ENCODE measurements at regions of chrX and their contacts with region 1.

Region 1: DNA sequence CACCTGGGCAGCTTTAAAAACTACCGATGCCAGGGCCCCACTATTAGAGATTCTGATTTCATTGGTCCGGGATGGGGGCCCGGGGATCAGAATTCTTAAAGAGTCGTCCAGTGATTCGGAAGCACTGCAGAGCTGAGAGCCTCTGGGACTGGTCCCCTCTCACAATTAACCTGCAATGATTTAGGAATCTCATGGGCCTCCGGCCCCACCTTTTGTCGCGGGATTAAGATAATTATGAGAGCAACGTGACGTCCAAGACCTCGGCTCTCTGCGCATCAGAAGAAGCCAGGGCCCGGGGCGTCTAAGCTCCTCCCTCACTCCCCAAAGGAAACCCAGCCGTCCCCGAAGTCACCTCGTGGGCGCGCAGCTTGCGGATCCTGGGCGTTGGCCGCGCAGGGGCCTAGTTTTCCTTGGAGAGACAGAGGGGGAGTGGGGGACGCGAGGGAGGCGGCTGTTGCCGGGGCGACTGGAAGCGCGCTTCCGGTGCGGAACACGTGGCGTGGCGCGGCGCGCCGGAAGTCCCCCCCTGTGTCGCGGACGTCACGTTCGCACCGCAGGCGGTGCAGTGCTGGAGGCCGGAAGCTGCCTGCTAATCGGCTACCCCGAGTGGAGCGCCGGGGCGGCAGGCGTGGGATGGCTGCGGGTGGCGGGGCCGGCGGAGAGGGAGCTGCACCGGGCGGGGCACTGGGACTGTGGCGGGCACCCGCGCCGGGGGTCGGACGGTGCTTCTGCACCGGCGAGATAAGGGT is at the start of gene GEMIN8:
- DNase-seq: peak; percentile 90 to 96 (median 93)
- H3K4me3 ChIP-seq: peak within 1 kb of the TSS; percentile 49
- H3K27ac ChIP-seq: peak within 1 kb of the TSS in 1 of 2 donors; percentile 57
- H3K4me1 ChIP-seq: peaks cover 1% of the 10 kb centered on the region
- H3K27me3 ChIP-seq: no peaks in the 10 kb centered on the region
- CTCF ChIP-seq: no peak
- EP300 ChIP-seq: no peak
- POLR2A ChIP-seq: peak; percentile 66
- total RNA-seq, gene GEMIN8: 18.0 to 24.6 (median 22.4) TPM

Region 2: GRCh38 chrX:13506574-13506973 is 523.0 kb before region 1 on chrX:
- intact Hi-C with region 1: loop called (anchors 2 to 10 kb)
- DNase-seq: peak; percentile 21 to 63 (median 53)
- H3K4me3 ChIP-seq: no peak overlapping the region
- H3K27ac ChIP-seq: no peak overlapping the region
- H3K4me1 ChIP-seq: no peaks in the 10 kb centered on the region
- H3K27me3 ChIP-seq: no peaks in the 10 kb centered on the region
- CTCF ChIP-seq: peak; percentile 40 to 47 (median 47)
- EP300 ChIP-seq: no peak
- POLR2A ChIP-seq: no peak

Region 3: DNA sequence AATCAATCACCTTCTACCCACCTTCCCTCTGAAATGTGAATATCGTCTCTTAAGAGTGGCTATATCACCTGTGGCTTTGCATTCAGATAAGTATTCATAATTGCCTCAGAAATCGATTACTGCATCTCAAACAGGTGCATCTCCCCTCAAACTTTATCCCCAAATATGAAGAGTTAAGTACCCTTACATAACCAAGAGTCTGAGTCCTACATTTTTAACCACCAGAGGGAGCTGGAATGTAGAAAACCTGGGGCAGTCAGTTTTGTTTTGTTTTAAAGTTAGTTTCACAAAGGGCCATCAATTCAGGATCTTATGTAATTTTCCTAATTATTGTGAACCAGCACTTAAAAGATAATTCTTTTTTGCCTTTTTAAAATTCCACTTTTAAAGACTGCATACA is 371.0 kb before region 1 on chrX:
- intact Hi-C with region 1: loop called in 3 of 4 experiments (anchors 5 kb)
- DNase-seq: no peak
- H3K4me3 ChIP-seq: no peak overlapping the region
- H3K27ac ChIP-seq: peak overlapping the region in 1 of 2 donors; percentile 42
- H3K4me1 ChIP-seq: peaks cover 3% of the 10 kb centered on the region
- H3K27me3 ChIP-seq: no peaks in the 10 kb centered on the region
- CTCF ChIP-seq: peak; percentile 70 to 82 (median 79)
- EP300 ChIP-seq: no peak
- POLR2A ChIP-seq: no peak

Region 4: GRCh38 chrX:13669246-13669737 is 360.3 kb before region 1 on chrX:
- intact Hi-C with region 1: loop called in 1 of 4 experiments (anchors 5 kb)
- DNase-seq: peak; percentile 53 to 75 (median 71)
- H3K4me3 ChIP-seq: no peak overlapping the region
- H3K27ac ChIP-seq: no peak overlapping the region
- H3K4me1 ChIP-seq: no peaks in the 10 kb centered on the region
- H3K27me3 ChIP-seq: no peaks in the 10 kb centered on the region
- CTCF ChIP-seq: no peak
- EP300 ChIP-seq: no peak
- POLR2A ChIP-seq: no peak

Region 5: DNA sequence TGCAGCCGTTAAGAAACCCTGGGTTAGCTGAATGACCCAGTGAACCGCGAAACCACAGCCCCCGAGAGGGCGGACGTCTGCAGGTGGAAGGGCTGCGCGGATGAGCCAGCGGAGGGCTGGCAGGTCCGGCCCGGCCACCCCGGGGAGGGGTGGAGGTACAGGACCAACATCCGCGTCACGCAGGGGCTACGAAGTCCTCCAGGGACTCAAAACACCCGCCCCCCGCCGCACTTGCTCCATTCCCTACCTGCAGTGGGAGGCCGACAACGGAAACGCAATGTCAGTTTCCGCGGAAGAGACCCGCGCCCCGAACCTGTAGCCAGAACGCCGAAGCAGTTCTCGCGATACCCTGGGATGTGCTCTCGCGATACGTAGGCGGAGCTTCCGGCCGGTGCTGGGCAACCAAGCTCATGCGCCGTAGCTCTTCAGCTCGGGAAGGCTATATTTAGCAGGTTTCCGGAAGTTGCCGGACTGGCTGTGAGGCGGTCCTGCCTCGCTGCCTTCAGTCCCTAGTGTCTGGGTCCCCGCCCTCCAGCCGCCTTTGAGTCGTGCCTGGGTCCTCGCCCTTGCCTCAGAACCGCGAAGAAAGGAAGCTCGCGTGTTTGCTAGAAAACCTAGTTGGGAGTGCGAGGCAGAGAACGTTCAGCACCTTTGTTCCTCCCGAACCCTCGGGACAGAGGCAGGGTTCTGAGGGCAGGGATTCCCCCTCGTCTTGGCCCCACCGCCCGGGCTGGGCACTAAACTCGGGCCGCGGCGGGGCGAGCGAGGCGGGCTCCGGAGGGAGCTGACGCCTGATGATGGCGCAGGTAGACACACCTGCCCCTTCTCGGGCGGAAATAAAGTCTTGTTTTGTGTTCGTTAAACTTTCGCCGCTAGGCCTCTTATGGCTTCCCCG is 295.1 kb before region 1 on chrX and contains the starts of genes OFD1 and TRAPPC2:
- intact Hi-C with region 1: no loop called
- DNase-seq: peak; percentile 94 to 97 (median 96)
- H3K4me3 ChIP-seq: peak within 1 kb of the TSS; percentile 88
- H3K27ac ChIP-seq: peak within 1 kb of the TSS; percentile 50 to 77
- H3K4me1 ChIP-seq: peaks cover 1% of the 10 kb centered on the region
- H3K27me3 ChIP-seq: no peaks in the 10 kb centered on the region
- CTCF ChIP-seq: peak in 1 of 3 donors; percentile 34
- EP300 ChIP-seq: no peak
- POLR2A ChIP-seq: peak; percentile 96
- total RNA-seq, gene OFD1: 27.0 to 35.7 (median 33.7) TPM
- total RNA-seq, gene TRAPPC2: 18.6 to 26.5 (median 21.1) TPM

Region 6: DNA sequence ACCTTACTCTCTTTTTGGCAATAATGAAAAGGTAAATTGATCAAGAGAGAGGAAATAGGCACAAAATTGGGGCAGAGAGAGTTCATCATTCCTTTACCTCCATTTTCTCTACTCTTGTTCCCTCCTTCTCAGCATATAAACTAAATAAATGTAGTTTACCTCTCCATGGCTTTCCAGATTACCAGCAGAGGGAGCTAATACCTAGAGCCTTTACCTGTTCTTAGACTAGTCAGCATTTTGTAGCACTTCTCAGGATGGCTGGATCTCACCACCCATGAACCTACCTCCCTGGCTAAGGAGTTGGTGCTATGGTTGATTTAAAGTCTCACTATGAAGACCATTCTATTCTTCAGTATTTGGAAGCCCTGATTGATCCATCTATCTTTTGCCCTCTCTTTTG is 279.4 kb before region 1 on chrX:
- intact Hi-C with region 1: loop called in 1 of 4 experiments (anchors 10 kb)
- DNase-seq: no peak
- H3K4me3 ChIP-seq: no peak overlapping the region
- H3K27ac ChIP-seq: no peak overlapping the region
- H3K4me1 ChIP-seq: no peaks in the 10 kb centered on the region
- H3K27me3 ChIP-seq: no peaks in the 10 kb centered on the region
- CTCF ChIP-seq: no peak
- EP300 ChIP-seq: no peak
- POLR2A ChIP-seq: no peak

Region 7: GRCh38 chrX:13764765-13765164 is 264.8 kb before region 1 on chrX:
- intact Hi-C with region 1: loop called in 2 of 4 experiments (anchors 10 kb)
- DNase-seq: no peak
- H3K4me3 ChIP-seq: no peak overlapping the region
- H3K27ac ChIP-seq: no peak overlapping the region
- H3K4me1 ChIP-seq: no peaks in the 10 kb centered on the region
- H3K27me3 ChIP-seq: no peaks in the 10 kb centered on the region
- CTCF ChIP-seq: no peak
- EP300 ChIP-seq: no peak
- POLR2A ChIP-seq: no peak